OCI-LY7 (cell line): ENCODE measurements at regions of chr4 and their contacts with region 1.

Region 1: DNA sequence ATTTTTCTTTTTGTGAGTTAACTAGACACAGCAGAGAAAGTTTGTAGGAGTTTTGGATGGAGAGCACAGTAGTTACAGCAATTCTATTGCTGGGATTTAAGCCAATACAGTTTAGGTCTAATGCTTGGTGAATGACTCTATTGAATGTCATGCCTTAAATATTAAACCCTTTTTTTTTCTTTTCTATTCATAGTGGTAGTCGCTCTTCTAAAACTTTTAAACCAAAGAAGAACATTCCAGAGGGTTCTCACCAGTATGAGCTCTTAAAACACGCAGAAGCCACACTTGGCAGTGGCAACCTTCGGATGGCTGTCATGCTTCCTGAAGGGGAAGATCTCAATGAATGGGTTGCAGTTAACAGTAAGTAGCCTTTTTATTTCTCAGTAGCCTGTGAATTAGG is 34.8 kb upstream of the DCK start:
- DNase-seq: no peak
- H3K4me3 ChIP-seq: no peak overlapping the region
- H3K27ac ChIP-seq: no peak overlapping the region
- H3K4me1 ChIP-seq: no peaks in the 10 kb centered on the region
- CTCF ChIP-seq: no peak

Region 2: GRCh38 chr4:70943114-70943513 is 15.6 kb before region 1 on chr4:
- CTCF ChIA-PET with region 1: no interaction called
- POLR2A ChIA-PET with region 1: interaction called, 84 read pairs
- intact Hi-C with region 1: no loop called
- DNase-seq: peak; percentile 77
- H3K4me3 ChIP-seq: peak overlapping the region; percentile 36
- H3K27ac ChIP-seq: peak overlapping the region; percentile 65
- H3K4me1 ChIP-seq: peaks cover 38% of the 10 kb centered on the region
- CTCF ChIP-seq: no peak